Activated CD8-positive, alpha-beta T cell treated with anti-CD3 and anti-CD28 coated beads, Interleukin-2, amount 10 ng/mL, durations not matched to agents 7 days and 5 days (primary cell): ENCODE measurements at regions of chr15 and their contacts with region 1.

Region 1: DNA sequence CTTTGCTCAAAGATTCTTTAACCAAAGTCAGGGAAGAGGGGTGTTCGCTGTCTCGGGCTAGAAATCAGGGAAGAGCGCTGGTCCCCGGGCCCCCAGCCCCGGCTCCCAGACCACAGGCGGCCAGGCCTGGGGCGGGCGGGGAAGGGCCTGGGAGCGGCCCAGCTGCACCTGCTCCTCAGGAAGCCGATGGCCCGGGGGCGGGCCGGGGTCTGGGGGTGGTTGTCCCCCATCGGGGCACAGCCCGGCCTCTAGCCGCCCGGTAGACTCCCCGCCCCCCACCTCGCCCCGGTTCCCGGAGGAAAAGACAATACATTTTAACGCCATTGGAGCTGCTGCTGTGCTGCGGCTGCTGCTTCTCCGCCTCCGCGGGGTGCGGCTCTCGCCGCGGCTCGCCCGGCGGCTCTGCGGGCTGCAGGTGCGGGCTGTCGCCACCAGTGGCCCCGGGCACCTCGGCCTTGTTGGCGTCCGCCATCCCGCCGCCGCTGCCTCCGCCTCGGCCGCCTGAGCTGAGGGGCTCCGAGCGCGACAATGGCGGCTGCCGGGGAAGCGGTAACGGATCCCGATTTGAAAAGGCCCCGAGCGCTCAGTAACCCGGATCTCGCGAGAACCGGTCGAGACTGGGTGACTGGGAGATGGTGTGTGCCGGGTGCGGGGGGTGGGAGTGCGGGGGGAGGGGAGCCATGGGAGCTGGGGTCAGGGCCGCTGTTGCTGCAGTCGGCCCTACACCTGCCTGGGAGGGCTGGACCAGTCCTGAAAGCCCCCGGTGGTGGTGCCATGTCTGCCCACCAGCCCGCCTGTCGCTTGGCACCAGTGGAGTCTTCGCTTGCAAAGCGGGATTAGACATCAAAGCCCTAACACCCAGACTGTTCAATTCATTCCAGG is at the start of gene MYEF2:
- DNase-seq: peak; percentile 86
- ATAC-seq: peak; percentile 90
- H3K4me3 Mint-ChIP-seq: peak within 1 kb of the TSS; percentile 92
- H3K27ac Mint-ChIP-seq: peak within 1 kb of the TSS; percentile 86
- H3K4me1 Mint-ChIP-seq: peaks cover 24% of the 10 kb centered on the region
- H3K27me3 Mint-ChIP-seq: peaks cover 13% of the 10 kb centered on the region
- total RNA-seq, gene MYEF2: 25.4 to 28.5 TPM

Region 2: GRCh38 chr15:48205981-48206380 is 28.0 kb after region 1 on chr15 and contains the start of gene SLC12A1:
- CTCF ChIA-PET with region 1: no interaction called
- POLR2A ChIA-PET with region 1: no interaction called
- DNase-seq: no peak
- ATAC-seq: no peak
- H3K4me3 Mint-ChIP-seq: no peak within 1 kb of the TSS
- H3K27ac Mint-ChIP-seq: no peak within 1 kb of the TSS
- H3K4me1 Mint-ChIP-seq: no peaks in the 10 kb centered on the region
- H3K27me3 Mint-ChIP-seq: peaks cover 7% of the 10 kb centered on the region
- total RNA-seq, gene SLC12A1: not detected

Region 3: DNA sequence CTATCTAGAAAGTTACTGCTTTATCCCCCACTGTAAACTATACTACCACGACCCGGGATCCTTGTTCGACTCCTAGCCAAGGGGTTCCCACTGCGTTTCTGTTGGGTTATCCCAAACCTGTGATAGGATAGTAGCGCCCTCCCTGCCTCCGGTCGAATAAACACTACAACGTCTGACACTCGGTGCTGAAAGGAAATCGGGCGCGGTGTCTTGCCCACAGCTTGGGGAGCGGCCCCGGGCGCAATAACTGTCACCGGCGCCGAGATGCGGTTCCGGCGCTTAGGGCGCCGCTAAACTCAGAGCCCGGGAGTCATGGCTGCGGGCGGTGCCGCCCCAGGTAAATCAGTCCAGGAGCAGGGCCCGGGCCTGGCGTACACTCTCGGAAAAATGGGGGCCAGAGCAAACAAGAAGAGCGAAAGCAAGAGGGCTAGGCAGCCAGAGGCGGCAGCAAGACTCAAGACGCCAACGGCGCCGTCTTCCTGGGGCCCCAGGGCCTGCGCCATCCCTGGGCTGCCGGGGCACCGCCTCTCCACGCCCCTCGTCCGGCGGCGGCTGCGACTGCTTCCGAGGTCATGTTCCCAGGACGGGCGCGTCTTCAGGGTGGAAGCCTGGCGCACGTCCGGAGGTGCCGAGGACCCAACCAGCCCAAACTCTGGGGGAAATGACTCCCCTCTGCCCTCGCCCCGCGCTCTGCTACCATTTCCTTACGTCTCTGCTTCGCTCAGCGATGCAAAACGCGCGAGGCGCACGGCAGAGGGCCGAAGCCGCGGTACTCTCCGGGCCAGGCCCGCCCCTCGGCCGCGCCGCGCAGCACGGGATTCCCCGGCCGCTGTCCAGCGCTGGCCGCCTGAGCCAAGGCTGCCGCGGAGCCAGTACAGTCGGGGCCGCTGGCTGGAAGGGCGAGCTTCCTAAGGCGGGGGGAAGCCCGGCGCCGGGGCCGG is 153.1 kb after region 1 on chr15 and contains the start of gene DUT:
- CTCF ChIA-PET with region 1: no interaction called
- POLR2A ChIA-PET with region 1: interaction called, 13 read pairs
- DNase-seq: peak; percentile 86
- ATAC-seq: peak; percentile 87
- H3K4me3 Mint-ChIP-seq: peak within 1 kb of the TSS; percentile 92
- H3K27ac Mint-ChIP-seq: peak within 1 kb of the TSS; percentile 97
- H3K4me1 Mint-ChIP-seq: peaks cover 42% of the 10 kb centered on the region
- H3K27me3 Mint-ChIP-seq: no peaks in the 10 kb centered on the region
- total RNA-seq, gene DUT: 350 to 360 TPM

Region 4: DNA sequence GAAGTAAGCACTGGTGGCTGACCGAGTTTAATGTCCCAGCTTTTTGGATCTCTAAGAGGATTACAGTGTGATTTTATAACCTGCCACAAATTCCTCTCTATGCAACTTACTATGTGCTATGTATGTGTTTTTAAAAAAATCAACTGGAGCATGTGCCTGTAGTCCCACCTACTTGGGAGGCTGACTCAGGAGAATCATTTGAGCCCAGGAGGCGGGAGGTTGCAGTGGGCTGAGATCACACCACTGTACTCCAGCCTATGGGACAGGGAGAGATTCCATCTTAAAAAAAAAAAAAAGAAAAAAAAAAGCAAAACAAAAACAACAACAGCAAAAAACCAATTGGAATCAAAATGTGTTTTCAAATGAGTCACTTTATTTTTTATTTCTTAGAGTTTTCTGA is 182.8 kb after region 1 on chr15:
- CTCF ChIA-PET with region 1: no interaction called
- POLR2A ChIA-PET with region 1: no interaction called
- DNase-seq: no peak
- ATAC-seq: no peak
- H3K4me3 Mint-ChIP-seq: no peak overlapping the region
- H3K27ac Mint-ChIP-seq: no peak overlapping the region
- H3K4me1 Mint-ChIP-seq: peaks cover 7% of the 10 kb centered on the region
- H3K27me3 Mint-ChIP-seq: peaks cover 7% of the 10 kb centered on the region

Region 5: DNA sequence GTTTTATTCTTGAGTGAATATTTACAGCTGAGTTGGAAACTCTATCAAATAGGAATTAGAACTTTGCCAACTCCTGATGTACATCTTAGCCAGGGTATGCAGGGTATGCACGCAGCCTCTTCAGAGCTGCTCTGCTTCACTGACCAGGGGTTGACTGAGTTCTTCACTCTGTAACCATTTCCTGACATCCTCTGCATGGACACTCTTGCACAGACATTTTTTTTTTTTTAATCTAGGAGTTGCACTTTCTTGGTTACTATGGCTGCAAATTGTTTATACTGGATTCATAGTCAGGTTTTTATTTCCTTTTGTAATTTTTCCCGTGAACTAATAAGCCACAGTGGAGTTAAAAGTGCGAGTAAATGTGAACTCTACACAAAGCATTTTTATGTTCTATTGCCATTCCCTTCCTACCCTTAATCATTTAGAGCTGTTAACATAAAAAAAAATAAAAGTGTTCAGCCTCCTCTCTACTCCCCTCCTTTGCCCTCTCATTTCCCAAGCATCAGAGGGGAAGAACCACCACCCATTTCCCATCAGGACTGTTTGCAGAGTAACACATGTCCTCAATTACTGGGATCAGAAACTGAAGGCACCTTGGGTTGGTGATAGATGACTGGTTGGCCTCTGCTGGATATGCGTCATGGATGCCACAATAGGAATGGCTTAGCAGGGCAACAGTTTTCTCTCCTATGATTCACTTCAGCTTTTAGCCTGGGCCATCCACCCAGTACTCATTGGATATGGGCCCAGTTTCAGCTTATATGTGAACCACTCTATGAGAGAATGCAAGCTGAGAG is 207.2 kb after region 1 on chr15:
- CTCF ChIA-PET with region 1: no interaction called
- POLR2A ChIA-PET with region 1: no interaction called
- DNase-seq: no peak
- ATAC-seq: no peak
- H3K4me3 Mint-ChIP-seq: no peak overlapping the region
- H3K27ac Mint-ChIP-seq: no peak overlapping the region
- H3K4me1 Mint-ChIP-seq: no peaks in the 10 kb centered on the region
- H3K27me3 Mint-ChIP-seq: peaks cover 10% of the 10 kb centered on the region